ENCODE measurements at regions of chr12 and their contacts with region 1.

Region 1: DNA sequence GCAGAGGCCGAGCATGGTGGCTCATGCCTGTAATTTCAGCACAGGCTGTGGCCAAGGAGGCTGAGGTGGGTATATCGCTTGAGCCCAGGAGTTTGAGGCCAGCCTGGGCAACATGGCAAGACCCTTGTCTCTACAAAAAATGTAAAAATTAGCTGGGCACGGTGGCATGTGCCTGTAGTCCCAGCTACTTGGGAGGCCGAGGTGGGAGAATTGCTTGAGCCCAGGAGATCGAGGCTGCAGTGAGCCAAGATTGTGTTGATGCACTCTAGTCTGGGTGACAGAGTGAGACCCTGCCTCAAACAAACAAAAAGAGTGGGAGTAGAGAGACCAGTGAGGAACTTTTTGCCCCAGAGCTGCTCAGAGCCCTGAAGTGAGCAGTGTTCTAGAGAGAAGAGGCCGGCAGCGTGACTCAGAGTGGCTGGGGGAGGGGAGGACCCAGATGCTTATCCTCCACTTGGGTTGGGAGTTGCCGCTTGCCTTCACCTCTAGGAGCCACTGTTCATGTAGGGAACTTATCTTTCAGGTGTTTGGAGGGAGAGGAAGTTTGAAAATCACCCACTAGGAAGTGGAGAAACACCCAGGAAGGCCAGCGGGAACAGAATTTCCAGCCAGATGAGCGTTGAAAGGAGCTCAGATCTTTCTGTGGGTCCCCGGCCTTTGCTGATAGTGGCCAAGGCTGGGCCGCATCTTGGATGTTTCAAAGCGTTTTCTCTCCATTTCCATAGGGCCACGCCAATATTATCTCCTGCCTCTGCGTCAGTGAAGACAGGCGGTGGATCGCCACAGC is 15.3 kb downstream of the CFAP251 start:
- DNase-seq: peak; percentile 42
- ATAC-seq: peak; percentile 77
- H3K4me3 ChIP-seq: no peak overlapping the region
- H3K27ac ChIP-seq: no peak overlapping the region
- H3K4me1 ChIP-seq: peaks cover 2% of the 10 kb centered on the region; the same call in 1 of the 2 replicates
- H3K27me3 ChIP-seq: no peaks in the 10 kb centered on the region
- CTCF ChIP-seq: no peak
- POLR2A ChIP-seq: no peak
- RAD21 ChIP-seq: no peak

Region 2: DNA sequence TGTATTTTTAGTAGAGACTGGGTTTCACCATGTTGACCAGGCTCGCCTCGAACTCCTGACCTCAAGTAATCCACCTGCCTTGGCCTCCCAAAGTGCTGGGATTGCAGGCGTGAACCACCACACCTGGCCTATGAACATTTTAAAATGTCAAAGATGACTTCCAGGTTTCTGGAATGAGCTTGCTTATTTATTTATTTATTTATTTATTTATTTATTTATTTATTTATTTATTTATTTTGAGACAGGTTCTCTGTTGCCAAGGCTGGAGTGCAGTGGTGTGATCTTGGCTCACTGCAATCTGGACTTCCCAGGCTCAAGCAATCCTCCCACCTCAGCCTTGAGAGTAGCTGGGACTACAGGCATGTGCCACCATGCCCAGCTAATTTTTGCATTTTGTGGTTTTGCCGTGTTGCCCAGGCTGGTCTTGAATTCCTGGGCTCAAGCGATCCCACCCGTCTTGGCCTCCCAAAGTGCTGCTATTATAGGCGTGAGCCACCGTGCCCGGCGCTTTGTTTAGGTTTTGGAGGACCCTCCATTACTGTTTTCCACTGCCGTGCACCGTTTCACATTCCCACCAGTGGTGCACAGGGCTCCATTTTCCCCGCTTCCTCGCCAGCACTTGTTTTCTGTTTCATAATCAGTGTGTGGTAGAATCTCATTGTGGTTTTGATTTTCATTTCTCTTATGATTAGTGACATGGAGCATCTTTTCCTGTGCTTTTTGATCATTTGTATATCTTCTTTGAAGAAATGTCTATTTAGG is 21.7 kb before region 1 on chr12:
- CTCF ChIA-PET with region 1: no interaction called
- POLR2A ChIA-PET with region 1: no interaction called
- dilution Hi-C with region 1: no loop called
- in situ Hi-C with region 1: no loop called
- intact Hi-C with region 1: loop called (anchors 1 kb)
- DNase-seq: no peak
- ATAC-seq: no peak
- H3K4me3 ChIP-seq: no peak overlapping the region
- H3K27ac ChIP-seq: no peak overlapping the region
- H3K4me1 ChIP-seq: 0 out of 2 replicates have a peak, but pooled peaks cover 1% of the 10 kb centered on the region
- H3K27me3 ChIP-seq: no peaks in the 10 kb centered on the region
- CTCF ChIP-seq: no peak
- POLR2A ChIP-seq: no peak
- RAD21 ChIP-seq: no peak

Region 3: DNA sequence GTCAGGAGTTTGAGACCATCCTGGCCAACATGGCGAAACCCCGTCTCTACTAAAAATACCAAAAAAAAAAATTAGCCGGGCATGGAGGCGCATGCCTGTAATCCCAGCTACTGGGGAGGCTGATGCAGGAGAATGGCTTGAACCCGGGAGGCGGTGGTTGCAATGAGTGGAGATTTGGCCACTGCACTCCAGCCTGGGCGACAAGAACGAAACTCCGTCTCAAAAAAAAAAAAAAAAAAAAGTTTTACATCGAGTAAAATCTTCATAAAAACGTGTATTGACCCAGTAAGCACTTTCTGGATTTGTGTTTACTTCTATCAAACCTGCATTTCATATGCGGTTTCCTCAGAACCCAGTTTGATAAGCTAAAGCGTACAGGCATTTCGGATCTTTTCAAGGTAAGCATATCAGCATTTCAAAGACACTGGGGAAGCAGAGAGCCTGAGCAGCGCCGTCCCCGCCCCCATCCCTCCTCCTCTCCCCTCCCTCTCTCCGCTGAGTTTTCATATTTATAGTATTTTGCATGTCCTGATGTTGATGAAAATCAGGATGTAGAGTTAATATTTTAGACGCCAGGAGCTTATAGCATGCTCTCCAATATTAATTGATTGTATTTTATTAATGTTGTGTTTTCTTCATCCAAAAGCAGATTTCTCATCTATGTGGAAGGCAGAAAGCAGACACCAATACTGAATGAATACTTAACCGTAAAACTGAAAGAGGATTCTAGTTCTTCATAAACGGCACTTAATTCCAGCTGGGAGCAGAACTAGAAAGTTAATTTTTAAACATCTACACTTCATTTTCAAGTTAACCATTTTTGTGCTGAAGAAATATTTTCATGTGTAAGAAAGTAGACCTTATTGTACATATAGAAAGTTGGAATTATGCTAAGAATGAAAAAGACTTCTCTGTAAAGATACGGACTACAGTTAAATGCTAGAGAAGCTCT is 892.3 kb after region 1 on chr12:
- CTCF ChIA-PET with region 1: no interaction called
- POLR2A ChIA-PET with region 1: no interaction called
- dilution Hi-C with region 1: no loop called
- in situ Hi-C with region 1: no loop called
- intact Hi-C with region 1: no loop called
- DNase-seq: no peak
- ATAC-seq: peak; percentile 78
- H3K4me3 ChIP-seq: peak overlapping the region; percentile 67
- H3K27ac ChIP-seq: no peak overlapping the region
- H3K4me1 ChIP-seq: no peaks in the 10 kb centered on the region
- H3K27me3 ChIP-seq: peaks cover 2% of the 10 kb centered on the region; the same call in 1 of the 2 replicates
- CTCF ChIP-seq: no peak
- POLR2A ChIP-seq: no peak
- RAD21 ChIP-seq: no peak